Caco-2 (cell line): ENCODE measurements at regions of chr11 and their contacts with region 1.

Region 1: DNA sequence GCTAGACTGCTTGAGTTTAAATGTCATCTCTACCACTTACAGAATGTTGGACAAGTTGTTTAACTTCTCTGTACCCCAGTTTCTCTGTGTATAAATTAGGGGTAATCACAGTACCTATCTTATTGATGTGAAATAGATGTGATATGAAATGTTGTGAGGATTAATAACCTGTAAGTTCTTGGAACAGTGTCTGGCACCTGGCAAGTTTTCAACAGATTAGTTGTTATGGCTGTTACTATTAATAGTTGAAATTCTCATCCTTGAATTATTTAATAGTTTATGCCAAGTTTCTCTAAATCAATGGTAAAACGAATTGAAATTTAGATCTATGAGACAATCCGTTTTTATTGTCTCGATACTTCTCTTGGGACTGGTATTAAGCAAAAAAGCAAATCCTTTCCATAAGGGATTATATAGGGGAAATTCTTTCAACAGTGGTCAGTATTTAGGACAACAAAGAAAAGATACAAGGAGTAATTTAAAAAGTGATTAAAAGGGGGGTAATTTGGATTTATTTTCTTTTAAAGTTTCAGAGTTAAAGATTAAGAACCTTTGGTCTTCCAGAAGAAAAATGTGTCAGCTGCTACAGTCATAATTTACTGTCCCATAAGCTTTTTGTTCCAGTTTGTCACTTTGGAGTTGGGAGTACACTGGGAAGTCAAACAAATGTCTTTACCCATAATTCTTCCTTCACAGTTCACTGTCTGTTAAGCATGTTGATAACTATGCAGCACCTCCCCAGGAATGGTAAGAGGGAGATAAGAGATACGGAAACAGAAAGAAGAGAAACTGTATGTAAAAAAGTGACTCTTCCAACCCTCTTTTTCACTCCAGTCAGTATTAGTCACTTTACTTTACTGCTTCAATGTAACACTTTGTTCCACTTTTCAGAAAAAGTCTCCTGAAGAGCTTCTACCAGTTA is 13.2 kb downstream of the PDE3B start:
- DNase-seq: peak; percentile 32 to 50
- H3K4me3 ChIP-seq: peak overlapping the region; percentile 17; the same call in 1 of the 2 replicates
- H3K4me3 Mint-ChIP-seq: peak overlapping the region; percentile 52
- H3K27ac Mint-ChIP-seq: peak overlapping the region; percentile 45
- H3K4me1 ChIP-seq: peaks cover 12% of the 10 kb centered on the region
- H3K4me1 Mint-ChIP-seq: peaks cover 13% of the 10 kb centered on the region
- H3K27me3 ChIP-seq: no peaks in the 10 kb centered on the region
- H3K27me3 Mint-ChIP-seq: no peaks in the 10 kb centered on the region
- CTCF ChIP-seq: no peak

Region 2: DNA sequence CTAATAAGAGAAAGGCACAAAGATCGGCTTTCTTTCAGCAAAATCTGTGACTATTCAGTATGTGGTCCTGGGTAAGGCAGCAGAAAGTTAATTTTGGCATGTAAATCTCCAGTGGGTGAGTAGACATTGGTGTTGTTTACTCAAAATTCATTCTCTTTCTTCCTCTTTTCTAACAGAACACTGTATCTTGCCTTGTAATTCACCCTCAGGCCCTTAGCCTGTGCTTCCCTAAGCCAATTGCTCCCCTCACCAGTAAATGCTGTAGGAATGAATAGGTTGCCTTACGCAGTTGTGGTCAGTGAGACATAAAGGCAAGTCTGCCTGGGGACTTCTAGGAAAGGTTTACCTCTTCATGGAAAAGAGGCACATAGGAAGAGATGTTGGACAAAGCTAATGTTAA is 63.1 kb before region 1 on chr11:
- CTCF ChIA-PET with region 1: no interaction called
- POLR2A ChIA-PET with region 1: no interaction called
- intact Hi-C with region 1: no loop called
- DNase-seq: no peak
- H3K4me3 ChIP-seq: no peak overlapping the region
- H3K4me3 Mint-ChIP-seq: no peak overlapping the region
- H3K27ac Mint-ChIP-seq: no peak overlapping the region
- H3K4me1 ChIP-seq: no peaks in the 10 kb centered on the region
- H3K4me1 Mint-ChIP-seq: no peaks in the 10 kb centered on the region
- H3K27me3 ChIP-seq: no peaks in the 10 kb centered on the region
- H3K27me3 Mint-ChIP-seq: no peaks in the 10 kb centered on the region
- CTCF ChIP-seq: no peak

Region 3: GRCh38 chr11:14687943-14688627 is 31.3 kb after region 1 on chr11:
- CTCF ChIA-PET with region 1: no interaction called
- POLR2A ChIA-PET with region 1: no interaction called
- intact Hi-C with region 1: loop called (anchors 1 kb)
- DNase-seq: no peak
- H3K4me3 ChIP-seq: no peak overlapping the region
- H3K4me3 Mint-ChIP-seq: no peak overlapping the region
- H3K27ac Mint-ChIP-seq: no peak overlapping the region
- H3K4me1 ChIP-seq: no peaks in the 10 kb centered on the region
- H3K4me1 Mint-ChIP-seq: peaks cover 20% of the 10 kb centered on the region
- H3K27me3 ChIP-seq: no peaks in the 10 kb centered on the region
- H3K27me3 Mint-ChIP-seq: no peaks in the 10 kb centered on the region
- CTCF ChIP-seq: no peak

Region 4: GRCh38 chr11:14789879-14790484 is 133.2 kb after region 1 on chr11:
- CTCF ChIA-PET with region 1: no interaction called
- POLR2A ChIA-PET with region 1: no interaction called
- intact Hi-C with region 1: no loop called
- DNase-seq: peak in 1 of 2 experiments; percentile 4
- H3K4me3 ChIP-seq: no peak overlapping the region
- H3K4me3 Mint-ChIP-seq: no peak overlapping the region
- H3K27ac Mint-ChIP-seq: no peak overlapping the region
- H3K4me1 ChIP-seq: no peaks in the 10 kb centered on the region
- H3K4me1 Mint-ChIP-seq: peaks cover 7% of the 10 kb centered on the region
- H3K27me3 ChIP-seq: no peaks in the 10 kb centered on the region
- H3K27me3 Mint-ChIP-seq: no peaks in the 10 kb centered on the region
- CTCF ChIP-seq: peak in 1 of 2 experiments; percentile 29